ENCODE measurements at regions of chr10 and their contacts with region 1.

Region 1: DNA sequence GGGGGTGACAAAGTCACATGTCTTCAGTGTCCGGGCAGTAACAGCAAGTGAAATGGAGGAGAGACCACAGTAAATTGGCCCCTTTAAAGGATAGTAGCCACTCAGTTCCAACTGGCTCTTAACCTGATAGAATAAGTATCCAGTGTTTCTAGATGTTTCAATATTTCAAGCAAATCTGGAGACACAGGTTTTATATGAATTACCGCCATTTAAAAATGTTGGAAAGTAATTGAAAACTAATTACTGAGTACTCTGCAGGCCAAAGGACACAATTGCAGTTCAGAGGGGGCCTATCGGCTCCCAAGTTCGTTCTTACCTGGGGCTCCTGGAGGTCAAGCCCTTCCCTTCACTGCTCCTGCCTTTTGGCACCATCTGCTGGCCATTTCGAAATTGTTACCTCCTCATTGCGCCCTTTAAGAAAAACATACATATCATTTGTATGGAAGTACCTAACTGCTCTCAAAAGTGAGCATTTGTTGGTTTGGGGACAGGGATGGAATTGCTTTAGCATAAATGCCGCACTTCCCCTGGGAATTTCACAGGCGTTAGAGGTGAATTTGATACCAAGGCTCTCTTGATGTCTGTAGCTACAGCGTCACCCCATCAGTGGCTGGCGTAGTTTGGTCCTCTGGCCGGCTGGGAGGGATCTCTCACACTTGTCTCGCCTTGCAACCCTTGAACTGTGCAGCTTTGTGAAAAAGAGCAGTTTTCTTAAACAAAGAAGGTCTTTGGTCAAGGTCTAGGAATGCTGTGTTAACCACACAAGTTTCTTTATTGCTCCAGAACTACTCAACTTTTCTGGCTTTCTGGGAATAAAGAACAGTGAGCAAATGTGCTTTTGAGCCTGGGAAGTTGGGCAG is 220.0 kb downstream of the ARHGAP21 start:
- DNase-seq: peak; percentile 75 to 80
- H3K4me3 ChIP-seq: no peak overlapping the region
- H3K4me3 Mint-ChIP-seq: no peak overlapping the region
- H3K27ac Mint-ChIP-seq: no peak overlapping the region
- H3K4me1 ChIP-seq: no peaks in the 10 kb centered on the region
- H3K4me1 Mint-ChIP-seq: peaks cover 7% of the 10 kb centered on the region
- H3K27me3 ChIP-seq: no peaks in the 10 kb centered on the region
- H3K27me3 Mint-ChIP-seq: no peaks in the 10 kb centered on the region
- CTCF ChIP-seq: peak; percentile 82 to 87

Region 2: GRCh38 chr10:23994479-23995046 is 509.1 kb before region 1 on chr10:
- CTCF ChIA-PET with region 1: interaction called, 3 read pairs
- POLR2A ChIA-PET with region 1: no interaction called
- intact Hi-C with region 1: loop called (anchors 1 kb)
- DNase-seq: peak; percentile 73 to 85
- H3K4me3 ChIP-seq: no peak overlapping the region
- H3K4me3 Mint-ChIP-seq: no peak overlapping the region
- H3K27ac Mint-ChIP-seq: no peak overlapping the region
- H3K4me1 ChIP-seq: no peaks in the 10 kb centered on the region
- H3K4me1 Mint-ChIP-seq: peaks cover 6% of the 10 kb centered on the region
- H3K27me3 ChIP-seq: no peaks in the 10 kb centered on the region
- H3K27me3 Mint-ChIP-seq: no peaks in the 10 kb centered on the region
- CTCF ChIP-seq: peak; percentile 97 to 98

Region 3: GRCh38 chr10:24249829-24250415 is 253.8 kb before region 1 on chr10:
- CTCF ChIA-PET with region 1: interaction called, 4 read pairs
- POLR2A ChIA-PET with region 1: no interaction called
- intact Hi-C with region 1: loop called (anchors 1 kb)
- DNase-seq: peak in 1 of 2 experiments; percentile 43
- H3K4me3 ChIP-seq: no peak overlapping the region
- H3K4me3 Mint-ChIP-seq: no peak overlapping the region
- H3K27ac Mint-ChIP-seq: peak overlapping the region; percentile 55
- H3K4me1 ChIP-seq: peaks cover 53% of the 10 kb centered on the region
- H3K4me1 Mint-ChIP-seq: peaks cover 37% of the 10 kb centered on the region
- H3K27me3 ChIP-seq: no peaks in the 10 kb centered on the region
- H3K27me3 Mint-ChIP-seq: no peaks in the 10 kb centered on the region
- CTCF ChIP-seq: no peak

Region 4: DNA sequence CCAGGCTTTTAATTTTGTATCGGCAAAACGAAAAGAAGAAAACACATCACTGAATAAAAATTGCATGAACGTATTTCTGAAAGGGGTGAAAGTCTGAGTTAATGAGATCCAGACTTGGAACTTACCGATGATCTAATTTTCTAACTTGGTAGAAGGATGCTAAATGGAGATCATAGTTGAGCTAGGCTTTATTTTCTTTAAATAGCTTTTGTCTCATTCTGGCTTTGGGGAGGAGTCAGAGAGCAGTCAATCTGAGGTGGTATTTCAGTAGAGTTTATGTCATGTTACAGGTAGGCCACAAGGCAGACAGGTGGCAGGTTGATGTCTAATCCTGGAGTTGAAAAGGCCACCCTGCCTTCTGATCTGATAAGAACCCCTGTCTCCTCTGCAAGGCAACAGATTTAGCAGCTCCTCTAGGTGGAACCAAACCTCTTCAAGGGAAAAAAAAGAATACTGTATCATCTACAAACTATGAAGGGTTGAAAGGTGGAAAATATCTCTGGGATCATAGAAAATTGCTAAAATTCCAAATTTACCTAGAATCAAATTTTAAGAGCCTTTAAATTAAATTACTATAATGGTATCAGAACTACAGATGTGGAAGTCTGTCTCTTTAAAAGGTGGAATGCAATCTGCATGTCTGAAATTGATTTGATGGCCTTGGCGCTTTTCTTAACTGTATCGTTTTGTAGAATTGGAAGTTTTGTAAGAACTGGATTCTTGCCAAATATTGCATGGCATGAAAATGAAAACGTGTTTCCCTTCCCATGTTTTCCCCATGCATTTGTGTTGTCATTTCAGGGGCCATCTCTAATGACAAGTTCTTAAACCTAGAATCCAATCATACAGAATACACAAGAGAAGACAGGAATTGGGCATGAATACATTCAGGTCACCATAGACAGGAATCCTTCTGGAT is 132.6 kb before region 1 on chr10:
- CTCF ChIA-PET with region 1: no interaction called
- POLR2A ChIA-PET with region 1: no interaction called
- intact Hi-C with region 1: loop called (anchors 1 kb)
- DNase-seq: peak in 1 of 2 experiments; percentile 43
- H3K4me3 ChIP-seq: no peak overlapping the region
- H3K4me3 Mint-ChIP-seq: no peak overlapping the region
- H3K27ac Mint-ChIP-seq: no peak overlapping the region
- H3K4me1 ChIP-seq: peaks cover 25% of the 10 kb centered on the region
- H3K4me1 Mint-ChIP-seq: peaks cover 27% of the 10 kb centered on the region
- H3K27me3 ChIP-seq: no peaks in the 10 kb centered on the region
- H3K27me3 Mint-ChIP-seq: no peaks in the 10 kb centered on the region
- CTCF ChIP-seq: peak in 1 of 2 experiments; percentile 33

Region 5: GRCh38 chr10:24396398-24396797 is 107.3 kb before region 1 on chr10:
- CTCF ChIA-PET with region 1: no interaction called
- POLR2A ChIA-PET with region 1: no interaction called
- intact Hi-C with region 1: loop called (anchors 1 kb)
- DNase-seq: no peak
- H3K4me3 ChIP-seq: no peak overlapping the region
- H3K4me3 Mint-ChIP-seq: no peak overlapping the region
- H3K27ac Mint-ChIP-seq: peak overlapping the region; percentile 26
- H3K4me1 ChIP-seq: no peaks in the 10 kb centered on the region
- H3K4me1 Mint-ChIP-seq: peaks cover 15% of the 10 kb centered on the region
- H3K27me3 ChIP-seq: no peaks in the 10 kb centered on the region
- H3K27me3 Mint-ChIP-seq: no peaks in the 10 kb centered on the region
- CTCF ChIP-seq: peak; percentile 34 to 40

Region 6: GRCh38 chr10:24432472-24433416 is 70.9 kb before region 1 on chr10:
- CTCF ChIA-PET with region 1: no interaction called
- POLR2A ChIA-PET with region 1: no interaction called
- intact Hi-C with region 1: loop called (anchors 2 kb)
- DNase-seq: peak; percentile 87 to 89
- H3K4me3 ChIP-seq: no peak overlapping the region
- H3K4me3 Mint-ChIP-seq: peak overlapping the region; percentile 63
- H3K27ac Mint-ChIP-seq: peak overlapping the region; percentile 93
- H3K4me1 ChIP-seq: peaks cover 60% of the 10 kb centered on the region
- H3K4me1 Mint-ChIP-seq: peaks cover 30% of the 10 kb centered on the region
- H3K27me3 ChIP-seq: no peaks in the 10 kb centered on the region
- H3K27me3 Mint-ChIP-seq: no peaks in the 10 kb centered on the region
- CTCF ChIP-seq: no peak